Right cardiac atrium (tissue), 5 donors: ENCODE measurements at regions of chr16 and their contacts with region 1.

Region 1: GRCh38 chr16:21083729-21084268 is 66.8 kb downstream of the DNAH3 start:
- DNase-seq: peak; percentile 70 to 86 (median 85)
- ATAC-seq: peak; percentile 94 to 95
- H3K4me3 ChIP-seq: no peak overlapping the region
- H3K27ac ChIP-seq: no peak overlapping the region
- H3K4me1 ChIP-seq: no peaks in the 10 kb centered on the region
- H3K27me3 ChIP-seq: no peaks in the 10 kb centered on the region

Region 2: DNA sequence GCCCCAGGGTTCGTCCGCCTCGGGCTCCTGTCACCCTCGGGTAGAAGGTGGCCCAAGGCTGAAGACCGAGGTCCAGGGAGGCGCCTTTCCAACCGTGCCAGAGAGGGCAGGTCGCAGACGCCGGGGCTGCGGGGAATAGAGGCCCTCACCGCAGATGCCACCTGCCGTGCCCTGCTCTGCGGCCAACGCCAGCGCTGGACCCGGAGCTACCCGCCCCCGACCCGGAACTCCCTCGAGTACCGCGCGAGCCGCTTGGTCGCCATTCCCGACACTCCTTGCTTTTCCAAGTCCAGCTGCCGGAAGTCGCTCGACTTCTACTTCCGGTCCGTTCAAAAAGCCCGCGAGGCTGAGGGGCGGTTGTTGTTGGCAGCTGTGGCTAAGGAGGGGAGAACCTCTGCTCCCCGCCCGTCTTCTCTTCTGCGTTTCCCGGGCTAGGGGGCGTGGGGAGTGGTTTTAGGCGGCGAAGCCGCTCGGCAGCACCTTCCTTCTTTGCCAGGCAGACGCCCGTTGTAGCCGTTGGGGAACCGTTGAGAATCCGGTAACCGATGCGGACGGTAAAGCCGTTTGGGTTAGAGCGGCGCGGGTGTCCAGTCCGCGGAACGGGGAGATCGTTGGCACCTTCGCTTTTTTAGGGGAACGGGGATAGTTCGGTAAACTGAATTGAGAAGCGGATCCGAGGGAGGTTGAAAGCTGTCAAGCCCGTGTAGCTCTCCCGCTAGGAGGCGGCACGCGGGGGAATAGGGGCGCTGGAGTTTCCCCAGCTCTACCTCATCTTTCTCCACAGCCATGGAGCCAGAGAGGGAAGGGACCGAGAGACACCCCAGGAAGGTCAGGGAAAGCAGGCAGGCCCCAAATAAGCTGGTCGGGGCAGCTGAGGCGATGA is 277.4 kb before region 1 on chr16 and contains the starts of genes ERI2 and REXO5:
- intact Hi-C with region 1: loop called in 1 of 4 experiments (anchors 10 kb)
- DNase-seq: peak; percentile 92 to 96 (median 95)
- ATAC-seq: peak; percentile 97
- H3K4me3 ChIP-seq: peak within 1 kb of the TSS; percentile 74
- H3K27ac ChIP-seq: peak within 1 kb of the TSS; percentile 54
- H3K4me1 ChIP-seq: no peaks in the 10 kb centered on the region
- H3K27me3 ChIP-seq: no peaks in the 10 kb centered on the region
- total RNA-seq, gene ERI2: 10.1 to 14.0 (median 11.1) TPM
- total RNA-seq, gene REXO5: 2.3 to 3.8 (median 2.9) TPM

Region 3: DNA sequence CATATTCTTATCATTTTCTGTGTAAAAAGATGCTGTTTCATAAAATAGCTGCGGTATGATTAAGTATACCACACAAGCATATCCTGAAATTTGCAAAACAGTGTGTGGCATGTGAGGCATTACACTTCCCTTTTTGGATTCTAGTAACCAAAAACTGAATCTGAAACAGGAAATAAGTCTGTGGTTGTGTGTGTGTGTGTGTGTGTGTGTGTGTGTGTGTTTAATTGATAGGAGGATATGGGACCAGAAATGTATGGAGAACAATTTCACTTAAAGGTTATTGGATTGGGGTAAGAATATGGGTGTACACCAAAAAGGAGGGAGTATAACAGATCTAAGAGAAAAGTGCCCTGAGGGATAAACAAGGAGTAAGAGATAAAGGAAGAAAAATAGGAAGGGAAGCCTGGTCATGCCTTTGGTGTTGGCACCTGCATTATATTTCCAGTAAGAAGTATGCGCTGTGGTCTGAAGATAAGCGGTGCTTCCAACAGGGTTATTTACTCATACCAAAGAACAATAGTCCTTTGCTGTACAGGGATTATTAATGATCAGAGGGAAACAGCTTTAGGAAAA is 179.2 kb before region 1 on chr16:
- intact Hi-C with region 1: no loop called
- DNase-seq: no peak
- ATAC-seq: no peak
- H3K4me3 ChIP-seq: no peak overlapping the region
- H3K27ac ChIP-seq: no peak overlapping the region
- H3K4me1 ChIP-seq: peaks cover 21% of the 10 kb centered on the region
- H3K27me3 ChIP-seq: no peaks in the 10 kb centered on the region

Region 4: GRCh38 chr16:21037736-21038135 is 46.1 kb before region 1 on chr16:
- intact Hi-C with region 1: no loop called
- DNase-seq: no peak
- ATAC-seq: no peak
- H3K4me3 ChIP-seq: no peak overlapping the region
- H3K27ac ChIP-seq: no peak overlapping the region
- H3K4me1 ChIP-seq: no peaks in the 10 kb centered on the region
- H3K27me3 ChIP-seq: no peaks in the 10 kb centered on the region